Transverse colon (tissue), 4 donors: ENCODE measurements at regions of chr6 and their contacts with region 1.

Region 1: DNA sequence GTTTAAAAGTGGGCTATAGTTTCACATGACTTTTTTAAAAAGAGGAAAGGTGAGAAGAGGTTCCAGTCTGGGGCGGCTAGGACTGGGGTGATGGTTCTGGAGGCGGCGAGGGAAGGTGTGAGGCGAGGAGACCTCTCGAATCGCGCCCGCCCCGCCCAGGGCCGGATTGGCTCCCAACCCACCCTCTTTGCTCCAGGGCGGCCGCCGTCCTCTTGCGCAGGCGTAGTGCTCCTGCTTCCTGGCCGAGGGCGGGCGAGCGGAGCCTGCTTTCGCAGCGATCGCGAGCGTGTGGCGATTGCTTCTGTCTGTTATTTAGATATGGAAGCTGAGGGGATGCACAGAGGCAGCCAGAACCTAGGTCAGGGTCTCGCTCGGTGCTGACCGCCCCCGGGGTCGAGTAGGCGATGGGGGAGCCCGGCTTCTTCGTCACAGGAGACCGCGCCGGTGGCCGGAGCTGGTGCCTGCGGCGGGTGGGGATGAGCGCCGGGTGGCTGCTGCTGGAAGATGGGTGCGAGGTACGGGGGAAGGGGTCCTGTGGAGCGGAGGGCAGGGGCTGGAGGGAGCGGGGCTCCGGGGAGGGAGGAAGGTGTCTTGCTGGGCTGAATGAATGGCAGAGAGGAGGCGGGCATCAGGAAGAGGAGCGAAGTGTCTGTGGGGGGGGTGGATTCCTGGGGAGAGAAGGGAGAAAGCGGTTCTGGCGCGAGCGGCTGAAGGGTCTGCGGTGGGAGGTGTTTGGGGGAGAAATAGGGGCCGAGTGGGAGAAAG is at the start of gene RNF8:
- DNase-seq: peak; percentile 94
- H3K4me3 ChIP-seq: peak within 1 kb of the TSS; percentile 81 to 98 (median 90)
- H3K27ac ChIP-seq: peak within 1 kb of the TSS; percentile 70 to 84 (median 77)
- H3K4me1 ChIP-seq: peaks cover 0 to 16% (median 8%) of the 10 kb centered on the region in 4 donors
- H3K27me3 ChIP-seq: no peaks in the 10 kb centered on the region
- CTCF ChIP-seq: no peak
- EP300 ChIP-seq: no peak
- POLR2A ChIP-seq: peak; percentile 59
- total RNA-seq, gene RNF8: 2.2 to 12.9 (median 9.0) TPM

Region 2: DNA sequence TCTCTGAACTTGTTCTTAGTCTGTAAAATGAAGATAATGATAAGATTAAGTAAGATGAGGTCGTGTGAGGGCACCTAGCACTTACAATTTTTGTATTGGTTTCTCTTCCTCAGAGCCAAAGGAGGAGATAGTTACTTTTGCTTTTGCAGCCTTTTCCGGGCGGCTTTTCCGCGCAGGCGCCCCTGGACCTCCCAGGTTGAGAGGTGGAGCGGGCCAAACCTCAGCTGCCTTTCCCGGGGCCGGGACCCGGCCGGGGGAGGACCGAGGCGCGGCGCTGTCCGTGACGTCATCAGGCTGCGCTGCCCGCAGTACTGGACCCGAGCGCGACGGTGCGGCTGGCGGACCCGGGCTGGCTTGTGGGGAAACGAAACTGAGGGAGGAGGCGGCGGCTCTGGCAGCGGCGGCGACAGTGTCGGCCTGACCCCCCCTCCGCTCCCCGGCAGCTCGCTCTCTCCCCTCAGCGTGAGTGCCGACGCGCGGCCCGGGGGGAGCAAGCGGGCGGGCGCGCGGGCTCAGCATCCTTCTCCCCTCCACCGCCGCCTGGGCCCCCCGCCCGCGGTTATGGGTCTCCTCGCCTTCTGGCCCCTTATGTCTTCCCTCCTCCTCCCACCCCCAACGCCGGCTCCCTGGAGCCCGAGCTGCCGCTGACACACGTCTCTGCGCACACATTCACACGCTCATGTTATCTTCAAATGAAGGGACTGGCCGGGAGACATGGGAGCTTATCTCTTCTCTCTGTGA is 79.1 kb after region 1 on chr6 and contains the start of gene CMTR1:
- in situ Hi-C with region 1: no loop called
- intact Hi-C with region 1: loop called (anchors 1 kb)
- DNase-seq: peak; percentile 97
- H3K4me3 ChIP-seq: peak within 1 kb of the TSS; percentile 88 to 98 (median 94)
- H3K27ac ChIP-seq: peak within 1 kb of the TSS; percentile 91 to 96 (median 94)
- H3K4me1 ChIP-seq: peaks cover 8 to 21% (median 15%) of the 10 kb centered on the region in 4 donors
- H3K27me3 ChIP-seq: peaks cover 9% of the 10 kb centered on the region
- CTCF ChIP-seq: peak in 1 of 5 experiments; percentile 39
- EP300 ChIP-seq: no peak
- POLR2A ChIP-seq: peak; percentile 78
- total RNA-seq, gene CMTR1: 16.5 to 40.6 (median 24.9) TPM